ENCODE measurements at regions of chr12 and their contacts with region 1.

Region 1: GRCh38 chr12:121499929-121500793 is 80.7 kb downstream of the KDM2B start:
- ATAC-seq: peak; percentile 92 to 99 (median 94)
- H3K4me3 ChIP-seq: peak overlapping the region; percentile 5 to 27 (median 21)
- H3K27ac ChIP-seq: peak overlapping the region; percentile 49 to 90
- H3K4me1 ChIP-seq: peaks cover 7 to 8% of the 10 kb centered on the region in 2 donors

Region 2: GRCh38 chr12:120775862-120776552 is 724.2 kb before region 1 on chr12:
- in situ Hi-C with region 1: no loop called
- ATAC-seq: peak in 4 of 8 experiments; percentile 32 to 90 (median 67)
- H3K4me3 ChIP-seq: no peak overlapping the region
- H3K27ac ChIP-seq: peak overlapping the region in 1 of 2 donors; percentile 21
- H3K4me1 ChIP-seq: peaks cover 2 to 12% of the 10 kb centered on the region in 2 donors

Region 3: DNA sequence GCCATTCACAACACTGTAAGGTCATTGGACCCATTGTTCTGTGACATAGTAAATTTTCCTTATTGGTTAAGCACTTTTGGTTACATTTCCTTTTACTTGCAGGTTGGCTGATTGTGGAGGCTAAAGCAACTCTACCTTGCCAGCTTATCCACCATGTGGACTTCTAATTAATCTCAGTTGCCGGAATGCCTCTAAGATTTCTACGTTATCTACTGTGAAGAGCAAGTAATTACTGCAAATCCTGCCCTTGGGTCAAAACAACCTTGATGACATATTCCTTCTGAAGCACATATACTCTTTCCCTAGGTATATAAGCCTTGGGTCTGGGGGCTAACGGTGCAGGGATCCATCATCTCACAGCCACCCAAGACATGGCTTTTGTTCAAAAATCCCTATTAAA is 188.8 kb after region 1 on chr12:
- in situ Hi-C with region 1: loop called in 1 of 9 experiments (anchors 10 kb)
- ATAC-seq: no peak
- H3K4me3 ChIP-seq: no peak overlapping the region
- H3K27ac ChIP-seq: no peak overlapping the region
- H3K4me1 ChIP-seq: peaks cover 0 to 3% of the 10 kb centered on the region in 2 donors

Region 4: GRCh38 chr12:121701667-121702277 is 201.6 kb after region 1 on chr12:
- in situ Hi-C with region 1: no loop called
- ATAC-seq: no peak
- H3K4me3 ChIP-seq: no peak overlapping the region
- H3K27ac ChIP-seq: no peak overlapping the region
- H3K4me1 ChIP-seq: no peaks in the 10 kb centered on the region

Measured in motor neuron (in vitro differentiated cells).